ENCODE measurements at regions of chr4 and their contacts with region 1.

Region 1: GRCh38 chr4:80033581-80033980 is 39.4 kb downstream of the ANTXR2 start:
- DNase-seq: no peak
- ATAC-seq: peak; percentile 53; the same call in 2 of the 3 replicates
- H3K4me3 ChIP-seq: no peak overlapping the region
- H3K27ac ChIP-seq: no peak overlapping the region
- H3K4me1 ChIP-seq: no peaks in the 10 kb centered on the region
- H3K27me3 ChIP-seq: no peaks in the 10 kb centered on the region
- CTCF ChIP-seq: no peak; a peak in 1 of 6 replicates
- EP300 ChIP-seq: no peak
- POLR2A ChIP-seq: no peak
- RAD21 ChIP-seq: no peak

Region 2: DNA sequence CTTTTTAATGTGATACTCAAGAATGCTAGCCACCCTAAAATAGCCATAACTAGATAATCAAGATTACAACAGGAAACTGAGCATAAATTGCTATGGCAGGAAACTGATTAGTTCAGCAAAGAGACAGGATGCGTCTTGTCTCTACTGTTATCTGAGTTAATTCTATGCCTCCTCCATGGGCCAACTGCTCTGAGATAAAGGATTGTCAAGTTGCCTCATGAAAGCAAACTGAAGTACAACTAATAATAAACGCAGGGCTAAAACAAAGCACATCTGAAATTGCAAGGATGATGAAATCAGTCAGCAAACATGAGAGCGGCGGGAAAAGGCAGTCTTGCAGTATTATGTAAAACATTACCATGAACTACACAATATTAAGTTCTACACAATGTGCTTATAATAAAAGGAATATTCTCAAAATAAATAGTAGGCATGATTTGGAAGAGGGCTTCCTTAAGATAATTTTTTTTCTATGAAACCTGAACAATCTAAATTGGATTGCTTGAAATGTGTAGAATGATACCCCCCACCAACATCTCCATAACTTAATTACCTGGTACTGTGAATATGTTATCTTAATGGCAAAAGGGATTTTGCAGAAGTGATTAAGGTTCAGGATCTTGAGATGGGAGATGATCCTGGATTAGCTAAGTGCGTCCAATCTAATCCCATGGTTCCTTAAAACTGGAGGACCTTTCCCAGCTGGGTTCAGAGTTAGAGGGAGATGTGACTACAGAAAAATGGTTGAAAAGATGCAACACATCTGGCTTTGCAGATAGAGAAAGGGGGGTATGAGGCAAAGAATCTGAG is 26.4 kb before region 1 on chr4:
- CTCF ChIA-PET with region 1: no interaction called
- POLR2A ChIA-PET with region 1: no interaction called
- RAD21 ChIA-PET with region 1: no interaction called
- SMC1A ChIA-PET with region 1: no interaction called
- in situ Hi-C with region 1: no loop called
- intact Hi-C with region 1: no loop called
- DNase-seq: no peak
- ATAC-seq: no peak
- H3K4me3 ChIP-seq: no peak overlapping the region
- H3K27ac ChIP-seq: no peak overlapping the region
- H3K4me1 ChIP-seq: peaks cover 10% of the 10 kb centered on the region; the same call in 1 of the 2 replicates
- H3K27me3 ChIP-seq: no peaks in the 10 kb centered on the region
- CTCF ChIP-seq: no peak
- EP300 ChIP-seq: no peak
- POLR2A ChIP-seq: no peak
- RAD21 ChIP-seq: no peak

Region 3: DNA sequence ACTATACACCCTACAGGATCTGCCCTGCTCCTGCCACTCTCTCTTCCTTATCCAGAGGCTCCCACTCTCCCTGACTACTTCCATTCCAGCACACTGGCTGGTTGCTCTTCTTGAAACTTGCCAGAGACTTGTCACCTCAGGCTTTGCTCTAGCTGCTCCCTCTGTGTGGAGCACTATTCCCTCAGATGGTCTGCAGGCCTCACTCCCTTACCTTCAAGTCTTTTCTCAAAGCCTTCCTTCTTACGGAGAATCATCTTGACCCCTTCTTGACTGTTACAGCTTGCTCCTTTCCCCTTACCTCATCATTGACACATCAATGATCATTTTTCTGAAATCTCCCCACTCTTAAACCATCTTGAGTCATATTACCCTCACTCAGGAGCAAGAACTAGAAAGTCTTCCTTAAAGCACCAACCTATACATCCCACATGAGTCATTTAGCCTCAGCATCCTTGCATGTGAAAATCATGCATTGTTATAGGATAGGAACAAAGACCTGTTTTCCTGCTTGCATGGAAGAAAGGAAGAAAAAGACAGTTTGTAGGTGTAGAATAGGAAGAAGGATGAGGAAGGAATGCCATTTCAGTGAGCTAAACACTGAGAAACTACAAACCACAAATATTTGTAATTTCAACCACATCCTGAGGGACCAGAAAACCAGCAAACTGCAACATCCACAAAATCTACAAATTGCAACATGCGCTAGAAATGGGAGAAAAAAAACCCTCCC is 16.3 kb before region 1 on chr4:
- CTCF ChIA-PET with region 1: interaction called, 13 read pairs
- POLR2A ChIA-PET with region 1: no interaction called
- RAD21 ChIA-PET with region 1: no interaction called
- SMC1A ChIA-PET with region 1: interaction called, 15 read pairs
- in situ Hi-C with region 1: no loop called
- intact Hi-C with region 1: no loop called
- DNase-seq: no peak
- ATAC-seq: peak; percentile 43
- H3K4me3 ChIP-seq: no peak overlapping the region
- H3K27ac ChIP-seq: no peak overlapping the region
- H3K4me1 ChIP-seq: peaks cover 8% of the 10 kb centered on the region
- H3K27me3 ChIP-seq: no peaks in the 10 kb centered on the region
- CTCF ChIP-seq: no peak
- EP300 ChIP-seq: no peak
- POLR2A ChIP-seq: no peak
- RAD21 ChIP-seq: no peak

Measured in GM12878 (cell line).